ENCODE measurements at regions of chr19 and their contacts with region 1.

Region 1: DNA sequence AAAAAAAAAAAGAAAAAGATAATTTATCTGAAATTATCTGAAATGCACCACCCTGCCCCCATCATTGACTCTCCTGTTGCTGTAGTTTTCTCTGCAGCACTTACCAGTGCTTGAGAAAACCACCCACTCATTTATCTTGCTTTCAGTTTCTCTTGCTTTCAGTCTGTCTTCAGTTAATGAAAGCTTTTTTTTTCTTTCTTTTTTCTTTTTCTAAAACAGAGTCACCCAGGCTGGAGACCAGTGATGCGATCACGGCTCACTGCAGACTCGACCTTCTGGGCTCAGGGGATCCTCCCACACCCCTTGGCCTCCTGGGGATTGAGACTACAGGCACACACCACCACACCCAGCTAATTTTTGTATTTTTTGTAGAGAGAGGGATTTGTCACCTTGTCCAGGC is 4.3 kb upstream of the ACP5 start:
- DNase-seq: peak; percentile 82
- H3K4me3 Mint-ChIP-seq: peak overlapping the region; percentile 51
- H3K27ac Mint-ChIP-seq: peak overlapping the region; percentile 95
- H3K4me1 Mint-ChIP-seq: peaks cover 29% of the 10 kb centered on the region
- H3K27me3 Mint-ChIP-seq: no peaks in the 10 kb centered on the region

Region 2: DNA sequence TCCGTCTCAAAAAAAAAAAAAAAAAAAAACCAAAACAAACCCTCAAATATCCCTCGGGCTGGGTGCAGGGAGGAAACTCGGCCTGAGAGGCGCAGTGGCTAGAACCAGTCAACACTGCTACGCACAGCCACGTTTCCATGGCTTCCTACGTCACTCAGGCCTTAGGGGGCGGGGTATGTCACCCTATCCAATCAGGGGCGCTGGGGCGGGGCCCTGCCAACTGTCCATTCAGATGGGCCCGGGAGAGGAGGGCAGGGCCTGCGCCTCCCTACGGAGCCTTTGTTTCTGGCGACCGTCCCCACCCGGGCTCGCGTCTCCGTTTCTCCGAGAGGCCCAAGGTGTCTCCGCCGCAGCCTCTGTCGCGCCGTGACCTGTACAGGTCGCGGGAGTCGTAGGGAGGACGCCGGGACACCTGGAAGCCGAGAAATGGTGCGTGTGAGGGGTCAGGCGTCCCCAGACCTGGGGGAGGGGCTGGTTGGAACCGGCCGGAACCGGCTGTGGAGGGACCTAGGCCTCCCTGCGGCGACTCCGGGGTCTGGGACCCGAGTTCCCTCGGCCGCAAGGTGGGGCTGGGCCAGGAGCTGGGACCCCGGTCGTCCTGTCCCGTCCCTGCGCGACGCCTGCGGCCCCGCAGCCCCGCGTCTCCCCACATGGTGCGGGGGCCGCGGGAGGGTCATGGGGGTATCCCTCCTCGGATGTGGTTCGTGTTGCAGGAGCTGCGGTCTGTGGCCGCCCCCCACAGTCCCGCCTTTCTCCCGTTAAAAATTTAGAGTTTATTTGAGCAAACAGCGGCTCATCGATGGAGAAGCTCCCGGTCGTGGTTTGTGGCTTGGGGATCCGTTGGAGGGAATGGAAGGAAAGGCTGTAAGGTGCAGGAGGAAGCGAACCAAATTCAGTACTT is 15.7 kb after region 1 on chr19 and contains the start of gene ZNF627:
- CTCF ChIA-PET with region 1: interaction called, 3 read pairs
- intact Hi-C with region 1: loop called (anchors 1 kb)
- DNase-seq: peak; percentile 100
- H3K4me3 Mint-ChIP-seq: peak within 1 kb of the TSS; percentile 85
- H3K27ac Mint-ChIP-seq: peak within 1 kb of the TSS; percentile 70
- H3K4me1 Mint-ChIP-seq: peaks cover 33% of the 10 kb centered on the region
- H3K27me3 Mint-ChIP-seq: no peaks in the 10 kb centered on the region
- total RNA-seq, gene ZNF627: 4.3 to 5.0 TPM

Measured in activated naive CD4-positive, alpha-beta T cell treated with anti-CD3 and anti-CD28 coated beads for 36 hours (primary cell).